ENCODE measurements at regions of chr16 and their contacts with region 1.

Region 1: GRCh38 chr16:11639925-11640899 is 28.0 kb upstream of the SNN start:
- DNase-seq: peak; percentile 83 to 95
- H3K4me3 ChIP-seq: peak overlapping the region in 1 of 2 donors; percentile 17
- H3K27ac ChIP-seq: peak overlapping the region; percentile 88 to 93
- H3K4me1 ChIP-seq: peaks cover 10 to 19% of the 10 kb centered on the region in 2 donors
- H3K27me3 ChIP-seq: no peaks in the 10 kb centered on the region
- CTCF ChIP-seq: no peak

Region 2: DNA sequence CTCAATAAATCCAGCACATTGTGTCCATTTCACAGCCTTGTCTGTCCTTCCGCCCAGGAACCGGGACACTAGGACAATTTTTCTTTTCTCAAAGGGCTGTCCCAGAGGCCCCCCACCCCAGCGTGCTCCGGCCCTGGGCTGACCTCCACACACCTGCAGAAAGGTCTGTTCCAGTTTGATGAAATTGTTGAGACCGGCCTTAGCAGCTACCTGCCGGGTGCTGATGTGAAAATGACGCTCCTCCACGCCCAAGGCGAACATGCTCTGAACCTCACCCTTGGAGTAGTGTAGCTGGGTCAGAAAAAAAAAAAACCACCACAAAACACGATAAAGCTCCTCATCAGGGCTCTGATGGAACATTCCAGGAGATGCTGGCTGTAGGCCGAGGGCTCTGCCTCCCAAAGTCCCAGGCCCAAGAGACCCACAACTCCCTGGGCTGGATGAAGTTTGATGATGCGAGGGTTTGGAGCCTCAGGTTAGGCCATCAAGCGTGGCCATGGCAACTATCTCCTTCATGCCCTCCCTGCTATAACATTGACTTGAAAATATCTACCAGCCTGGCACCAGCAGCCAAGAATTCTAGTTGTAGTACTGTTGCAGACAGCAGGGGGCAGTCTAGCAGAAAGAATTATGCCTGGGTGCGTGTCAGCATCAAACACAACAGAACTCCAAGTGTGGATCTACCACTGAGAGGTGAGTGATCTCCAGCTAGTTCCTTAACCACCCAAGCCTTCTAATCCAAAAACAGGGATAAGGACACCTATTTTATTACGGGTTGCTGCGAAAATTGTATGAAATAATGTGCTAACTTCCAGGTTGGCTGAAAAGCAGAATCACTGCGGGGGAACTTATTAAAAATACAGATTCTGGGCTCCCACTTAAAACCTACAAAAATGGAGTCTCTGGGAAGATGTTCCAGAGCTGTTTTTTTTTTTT is 232.9 kb before region 1 on chr16:
- intact Hi-C with region 1: loop called (anchors 1 kb)
- DNase-seq: peak in 1 of 2 donors; percentile 91
- H3K4me3 ChIP-seq: no peak overlapping the region
- H3K27ac ChIP-seq: no peak overlapping the region
- H3K4me1 ChIP-seq: peaks cover 3 to 19% of the 10 kb centered on the region in 2 donors
- H3K27me3 ChIP-seq: no peaks in the 10 kb centered on the region
- CTCF ChIP-seq: peak; percentile 61 to 67 (median 65)

Region 3: DNA sequence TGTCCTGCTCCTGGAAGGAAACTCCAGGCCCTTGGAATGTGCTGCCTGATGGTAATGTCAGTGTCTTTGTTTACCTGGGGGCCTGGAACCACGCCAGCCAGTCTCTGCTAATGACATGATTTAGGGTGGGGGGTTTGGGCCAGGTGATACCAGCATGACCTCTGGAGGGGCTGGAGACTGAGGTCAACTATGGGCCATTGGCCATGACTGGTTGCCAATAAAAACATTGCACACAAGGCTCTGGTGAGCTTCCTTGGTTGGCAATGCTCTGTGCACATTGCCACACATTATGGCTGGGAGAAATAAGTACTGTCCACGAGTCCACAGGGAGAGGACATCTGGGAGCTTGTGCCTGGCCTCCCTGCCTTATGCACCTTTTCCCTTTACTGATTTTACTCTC is 106.0 kb before region 1 on chr16:
- intact Hi-C with region 1: loop called (anchors 1 kb)
- DNase-seq: no peak
- H3K4me3 ChIP-seq: no peak overlapping the region
- H3K27ac ChIP-seq: no peak overlapping the region
- H3K4me1 ChIP-seq: no peaks in the 10 kb centered on the region
- H3K27me3 ChIP-seq: no peaks in the 10 kb centered on the region
- CTCF ChIP-seq: no peak

Region 4: GRCh38 chr16:11586856-11587642 is 53.2 kb before region 1 on chr16 and contains the start of gene LITAF:
- intact Hi-C with region 1: loop called (anchors 2 kb)
- DNase-seq: peak in 1 of 2 donors; percentile 80
- H3K4me3 ChIP-seq: peak within 1 kb of the TSS; percentile 86 to 98
- H3K27ac ChIP-seq: peak within 1 kb of the TSS; percentile 98
- H3K4me1 ChIP-seq: peaks cover 3 to 22% of the 10 kb centered on the region in 2 donors
- H3K27me3 ChIP-seq: no peaks in the 10 kb centered on the region
- CTCF ChIP-seq: no peak
- total RNA-seq, gene LITAF: 40.7 TPM

Region 5: GRCh38 chr16:11597239-11598101 is 42.7 kb before region 1 on chr16:
- intact Hi-C with region 1: loop called (anchors 2 kb)
- DNase-seq: peak in 1 of 2 donors; percentile 74
- H3K4me3 ChIP-seq: no peak overlapping the region
- H3K27ac ChIP-seq: peak overlapping the region; percentile 65 to 66
- H3K4me1 ChIP-seq: peaks cover 0 to 16% of the 10 kb centered on the region in 2 donors
- H3K27me3 ChIP-seq: no peaks in the 10 kb centered on the region
- CTCF ChIP-seq: no peak

Region 6: DNA sequence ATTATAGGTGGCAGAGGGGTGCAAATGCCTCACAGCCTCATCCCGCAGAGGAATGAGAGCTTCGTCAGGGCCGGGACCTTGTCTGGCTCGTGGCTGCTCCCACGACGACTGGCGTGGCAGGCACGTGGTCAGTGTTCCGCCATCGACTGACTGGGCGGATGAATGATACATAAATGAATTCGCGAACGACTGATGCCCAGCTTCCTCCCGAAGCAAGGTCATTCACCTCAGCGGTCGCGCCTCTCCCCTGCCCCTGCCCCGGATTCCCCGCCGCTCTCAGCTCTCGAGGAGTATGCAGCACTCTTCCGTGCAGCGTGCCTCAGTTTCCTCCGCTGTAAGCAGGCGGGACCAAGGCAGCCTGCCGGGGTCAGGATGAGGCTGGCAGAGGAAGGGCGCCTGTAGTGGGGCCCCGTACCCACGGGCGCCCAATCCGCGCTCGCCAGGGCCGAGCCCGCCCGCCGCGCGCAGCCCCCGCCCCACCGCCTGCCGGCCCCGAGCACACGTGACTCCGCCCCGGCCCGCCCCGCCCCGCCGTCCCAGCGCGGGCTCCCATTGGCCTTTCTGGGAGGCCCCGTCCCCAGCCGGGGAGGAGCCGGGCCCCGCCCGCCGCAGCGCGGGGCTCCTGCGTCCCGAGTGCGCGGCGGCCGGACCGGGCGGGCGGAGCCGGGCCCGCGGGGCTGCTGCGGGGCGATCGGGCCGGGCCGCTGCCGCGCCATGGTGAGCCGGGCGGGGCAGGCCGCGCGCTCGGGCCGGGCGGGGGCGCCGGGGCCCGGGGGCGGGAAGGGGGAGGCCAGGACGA is 27.8 kb after region 1 on chr16 and contains the start of gene SNN:
- intact Hi-C with region 1: loop called (anchors 1 kb)
- DNase-seq: peak; percentile 52 to 93
- H3K4me3 ChIP-seq: peak within 1 kb of the TSS; percentile 95 to 98
- H3K27ac ChIP-seq: peak within 1 kb of the TSS; percentile 78 to 81
- H3K4me1 ChIP-seq: peaks cover 9 to 34% of the 10 kb centered on the region in 2 donors
- H3K27me3 ChIP-seq: no peaks in the 10 kb centered on the region
- CTCF ChIP-seq: no peak
- total RNA-seq, gene SNN: 2.1 TPM

Region 7: DNA sequence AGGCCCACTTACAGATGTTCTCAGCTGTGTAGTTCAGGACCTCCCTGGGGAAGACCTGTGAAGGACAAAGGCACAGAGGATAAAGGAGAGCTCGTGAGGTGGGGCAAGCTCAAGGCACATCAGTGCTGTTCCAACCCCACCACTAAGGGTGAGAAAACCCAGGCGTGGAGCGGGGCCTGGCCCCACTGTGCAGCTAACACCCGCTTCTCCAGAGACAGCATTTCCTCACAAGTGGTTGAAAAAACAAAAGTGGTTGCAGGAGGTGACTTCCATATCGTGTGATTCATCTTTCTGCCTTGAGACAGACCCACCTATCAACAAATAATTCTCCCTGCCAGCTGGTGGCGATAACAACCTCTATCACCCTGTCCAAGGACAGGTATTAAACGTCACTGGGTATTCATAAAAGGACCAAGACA is 58.1 kb after region 1 on chr16:
- intact Hi-C with region 1: no loop called
- DNase-seq: no peak
- H3K4me3 ChIP-seq: no peak overlapping the region
- H3K27ac ChIP-seq: no peak overlapping the region
- H3K4me1 ChIP-seq: no peaks in the 10 kb centered on the region
- H3K27me3 ChIP-seq: no peaks in the 10 kb centered on the region
- CTCF ChIP-seq: no peak

Measured in ascending aorta (tissue), 2 donors.